Heart right ventricle (tissue), 16 donors: ENCODE measurements at regions of chr11 and their contacts with region 1.

Region 1: GRCh38 chr11:65117216-65118096 is at the start of gene ZNHIT2:
- DNase-seq: peak; percentile 99 to 100
- ATAC-seq: peak; percentile 85 to 93 (median 90)
- H3K4me3 ChIP-seq: peak within 1 kb of the TSS; percentile 54 to 99 (median 91)
- H3K27ac ChIP-seq: peak within 1 kb of the TSS in 9 of 10 donors; percentile 66 to 95 (median 86)
- H3K4me1 ChIP-seq: peaks cover 17 to 72% (median 49%) of the 10 kb centered on the region in 9 donors
- H3K27me3 ChIP-seq: peaks cover 0 to 10% (median 0%) of the 10 kb centered on the region in 7 donors
- CTCF ChIP-seq: peak; percentile 79 to 99 (median 95)
- total RNA-seq, gene ZNHIT2: 4.3 to 8.3 (median 6.5) TPM

Region 2: DNA sequence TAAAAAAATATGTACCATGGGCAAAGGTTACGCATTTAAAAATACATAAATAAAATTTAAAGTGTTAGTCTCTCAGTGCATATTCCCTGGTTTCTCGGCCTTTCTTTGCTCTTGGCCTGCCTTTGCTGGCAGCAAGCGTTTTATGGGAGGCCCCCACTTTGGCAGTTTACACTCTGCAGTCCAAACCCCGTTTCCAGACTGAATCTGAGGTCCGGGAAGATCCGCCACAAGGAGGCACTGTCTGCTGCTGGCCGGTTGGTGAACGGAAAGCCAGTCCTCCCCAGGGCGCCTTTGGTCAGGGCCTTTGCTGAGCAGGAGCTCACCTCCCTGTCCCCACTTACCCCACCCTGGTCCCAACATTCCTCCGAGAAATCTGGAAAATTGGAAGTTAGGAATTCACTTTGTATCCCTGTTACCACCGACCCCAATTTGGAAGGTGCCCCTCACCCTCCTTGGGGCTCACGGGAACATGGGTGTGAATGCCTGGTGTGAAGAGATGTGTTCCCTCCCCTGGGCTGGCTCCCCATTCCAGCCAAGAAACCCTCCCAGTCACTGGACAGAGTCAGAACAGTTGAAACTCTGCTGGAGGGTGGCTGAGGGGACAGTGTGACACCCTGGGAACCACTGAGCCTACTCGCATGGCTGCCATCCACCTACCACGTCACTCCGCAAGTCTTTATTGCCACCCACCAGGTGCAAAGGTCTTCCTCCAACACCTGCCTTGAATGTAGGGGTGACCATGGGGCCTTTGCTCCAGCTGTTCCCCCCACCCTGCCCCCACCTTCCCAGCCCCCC is 329.7 kb before region 1 on chr11:
- intact Hi-C with region 1: loop called in 1 of 10 experiments (anchors 10 kb)
- DNase-seq: peak; percentile 34 to 62
- ATAC-seq: peak in 6 of 8 donors; percentile 54 to 67 (median 61)
- H3K4me3 ChIP-seq: no peak overlapping the region
- H3K27ac ChIP-seq: peak overlapping the region in 1 of 10 donors; percentile 11
- H3K4me1 ChIP-seq: peaks cover 0 to 7% (median 0%) of the 10 kb centered on the region in 9 donors
- H3K27me3 ChIP-seq: no peaks in the 10 kb centered on the region
- CTCF ChIP-seq: peak; percentile 41 to 83 (median 67)

Region 3: DNA sequence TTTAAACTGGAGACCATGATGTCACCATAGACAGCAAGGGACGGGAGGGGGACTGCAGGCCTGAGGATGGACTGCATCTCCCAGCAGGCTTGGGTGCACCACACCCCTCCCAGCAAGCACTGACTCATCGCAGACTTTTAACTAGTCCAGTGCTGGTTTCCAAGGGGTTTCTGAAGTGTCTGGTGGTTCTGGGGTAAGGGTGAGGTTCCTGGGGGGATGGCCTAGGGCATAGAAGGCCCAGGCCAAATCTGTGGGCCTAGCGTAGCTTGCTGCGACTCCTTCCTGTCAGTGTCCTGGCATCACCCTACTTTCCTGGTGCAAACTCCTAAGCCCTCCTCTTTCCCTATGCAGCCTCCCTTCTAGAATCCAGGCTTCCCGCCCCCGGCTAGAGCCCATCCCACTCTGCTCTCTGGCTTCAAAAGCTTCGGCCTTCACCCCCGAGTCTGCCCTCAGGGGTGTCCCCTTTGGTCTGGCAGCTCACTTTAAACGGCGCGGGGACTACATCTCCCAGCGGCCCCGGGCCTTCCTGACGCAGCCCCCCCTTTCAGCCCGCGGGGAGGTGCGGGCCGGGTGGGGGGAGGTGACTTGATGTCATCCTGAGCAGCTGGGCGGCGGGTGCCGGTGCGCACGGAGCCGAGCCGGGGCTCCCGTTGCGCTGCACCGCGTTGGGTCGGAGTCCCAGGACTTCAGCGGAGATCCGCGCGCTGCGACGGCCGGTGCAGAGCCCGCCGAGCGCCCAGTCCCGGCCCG is 193.2 kb before region 1 on chr11 and contains the start of gene PPP2R5B:
- intact Hi-C with region 1: loop called in 1 of 10 experiments (anchors 5 kb)
- DNase-seq: peak; percentile 92 to 94
- ATAC-seq: peak; percentile 95 to 98 (median 98)
- H3K4me3 ChIP-seq: peak within 1 kb of the TSS; percentile 84 to 100 (median 98)
- H3K27ac ChIP-seq: peak within 1 kb of the TSS; percentile 89 to 99 (median 96)
- H3K4me1 ChIP-seq: peaks cover 10 to 43% (median 27%) of the 10 kb centered on the region in 9 donors
- H3K27me3 ChIP-seq: no peaks in the 10 kb centered on the region
- CTCF ChIP-seq: no peak
- total RNA-seq, gene PPP2R5B: 13.4 to 29.8 (median 20.4) TPM

Region 4: DNA sequence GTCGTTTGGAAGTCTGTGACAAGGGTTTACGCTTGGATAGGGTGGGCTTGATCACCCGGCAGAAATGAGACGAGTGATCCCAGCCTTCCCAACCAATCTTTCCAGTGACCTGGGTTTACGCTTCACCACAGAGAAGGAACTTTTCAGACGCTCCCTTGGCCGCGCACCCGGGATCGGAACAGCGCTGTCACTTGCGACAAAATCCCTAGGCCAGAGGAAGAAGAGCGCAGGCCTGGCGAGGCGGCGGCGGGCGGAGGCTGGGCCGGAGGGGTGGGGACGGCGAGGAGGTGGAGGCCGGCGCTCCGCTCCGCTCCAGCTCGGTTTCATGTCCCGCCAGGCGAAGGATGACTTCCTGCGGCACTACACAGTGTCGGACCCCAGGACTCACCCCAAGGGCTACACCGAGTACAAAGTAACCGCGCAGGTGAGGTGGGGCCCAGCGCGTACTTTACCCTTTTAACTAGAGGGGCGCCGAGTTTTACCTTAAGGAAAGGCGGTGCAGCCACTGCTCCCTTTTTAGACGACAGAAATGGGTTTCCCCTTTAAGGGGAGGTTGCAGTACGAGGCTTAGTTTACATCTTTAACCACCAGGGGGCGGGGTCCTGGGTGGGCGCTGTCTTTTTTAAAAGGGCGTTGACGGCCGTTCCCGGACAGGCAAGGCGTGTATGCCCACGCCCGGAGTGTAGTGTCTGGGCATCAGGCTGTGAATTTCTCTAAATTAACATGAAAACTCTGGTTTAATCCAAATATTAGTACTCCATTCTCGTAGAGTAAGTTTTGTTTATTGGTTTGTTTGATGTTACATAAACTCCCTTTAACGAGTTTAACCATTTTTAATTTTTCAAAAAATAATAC is 90.0 kb before region 1 on chr11 and contains the start of gene SNX15:
- intact Hi-C with region 1: loop called in 1 of 10 experiments (anchors 5 kb)
- DNase-seq: peak; percentile 93 to 96
- ATAC-seq: peak; percentile 98 to 99 (median 99)
- H3K4me3 ChIP-seq: peak within 1 kb of the TSS; percentile 2 to 68 (median 64)
- H3K27ac ChIP-seq: peak within 1 kb of the TSS; percentile 82 to 92 (median 88)
- H3K4me1 ChIP-seq: peaks cover 0 to 22% (median 17%) of the 10 kb centered on the region in 9 donors
- H3K27me3 ChIP-seq: no peaks in the 10 kb centered on the region
- CTCF ChIP-seq: peak; percentile 75 to 92 (median 88)
- total RNA-seq, gene SNX15: 11.4 to 21.8 (median 15.2) TPM

Region 5: DNA sequence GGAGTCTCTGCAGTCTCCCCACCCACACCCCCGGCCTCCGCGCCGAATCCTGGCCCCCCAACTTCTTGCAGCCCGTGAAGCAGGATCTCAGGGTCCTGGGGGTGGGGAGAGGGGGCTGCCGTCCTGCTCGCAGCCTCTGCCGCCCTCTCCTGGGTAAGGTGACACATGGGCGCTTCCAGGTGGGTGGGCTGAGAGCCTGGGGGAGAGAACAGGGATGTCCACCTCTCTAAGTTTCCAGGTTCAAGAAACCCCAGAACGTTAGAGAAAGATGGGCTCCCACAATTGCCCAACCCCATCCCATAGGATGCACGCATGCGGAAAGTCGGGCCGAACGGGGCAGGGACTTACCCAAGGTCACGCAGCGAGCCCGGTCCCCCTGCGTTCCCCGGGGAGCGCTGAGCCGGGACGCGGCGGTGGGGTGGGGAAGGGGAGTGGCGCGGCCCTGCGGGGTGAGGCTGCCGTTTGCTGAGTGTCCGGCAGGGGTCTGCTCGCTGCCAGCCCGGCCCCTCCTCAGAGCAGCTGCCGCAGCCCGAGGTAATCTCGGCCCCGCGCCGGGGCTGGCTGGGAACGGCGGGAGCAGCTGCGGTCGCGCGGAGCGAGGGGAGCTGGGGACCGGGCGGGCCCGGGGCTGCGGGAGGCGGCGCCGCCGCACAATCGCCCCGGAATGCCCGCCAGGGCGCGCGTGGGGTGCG is 63.6 kb after region 1 on chr11:
- intact Hi-C with region 1: loop called in 2 of 10 experiments (anchors 5 kb)
- DNase-seq: peak; percentile 55 to 69
- ATAC-seq: peak; percentile 36 to 70 (median 61)
- H3K4me3 ChIP-seq: peak overlapping the region; percentile 72 to 99 (median 88)
- H3K27ac ChIP-seq: peak overlapping the region; percentile 91 to 99 (median 95)
- H3K4me1 ChIP-seq: peaks cover 6 to 28% (median 21%) of the 10 kb centered on the region in 9 donors
- H3K27me3 ChIP-seq: no peaks in the 10 kb centered on the region
- CTCF ChIP-seq: peak in 7 of 9 donors; percentile 2 to 57 (median 51)